Naive thymus-derived CD4-positive, alpha-beta T cell (primary cell): ENCODE measurements at regions of chr11 and their contacts with region 1.

Region 1: GRCh38 chr11:62671575-62672389 is at the starts of genes LBHD1 and UQCC3:
- DNase-seq: peak; percentile 49 to 80 (median 73)
- ATAC-seq: peak; percentile 85
- H3K4me3 ChIP-seq: peak within 1 kb of the TSS; percentile 62
- H3K4me3 Mint-ChIP-seq: peak within 1 kb of the TSS; percentile 94 to 100 (median 99)
- H3K27ac ChIP-seq: peak within 1 kb of the TSS; percentile 90
- H3K27ac Mint-ChIP-seq: peak within 1 kb of the TSS; percentile 91 to 97 (median 96)
- H3K4me1 ChIP-seq: peaks cover 12 to 25% of the 10 kb centered on the region in 2 donors
- H3K4me1 Mint-ChIP-seq: peaks cover 12 to 62% (median 51%) of the 10 kb centered on the region in 7 donors
- H3K27me3 ChIP-seq: no peaks in the 10 kb centered on the region
- H3K27me3 Mint-ChIP-seq: no peaks in the 10 kb centered on the region
- total RNA-seq, gene LBHD1: 13.8 to 26.4 (median 20.8) TPM
- total RNA-seq, gene UQCC3: 2.2 to 8.2 (median 5.8) TPM

Region 2: DNA sequence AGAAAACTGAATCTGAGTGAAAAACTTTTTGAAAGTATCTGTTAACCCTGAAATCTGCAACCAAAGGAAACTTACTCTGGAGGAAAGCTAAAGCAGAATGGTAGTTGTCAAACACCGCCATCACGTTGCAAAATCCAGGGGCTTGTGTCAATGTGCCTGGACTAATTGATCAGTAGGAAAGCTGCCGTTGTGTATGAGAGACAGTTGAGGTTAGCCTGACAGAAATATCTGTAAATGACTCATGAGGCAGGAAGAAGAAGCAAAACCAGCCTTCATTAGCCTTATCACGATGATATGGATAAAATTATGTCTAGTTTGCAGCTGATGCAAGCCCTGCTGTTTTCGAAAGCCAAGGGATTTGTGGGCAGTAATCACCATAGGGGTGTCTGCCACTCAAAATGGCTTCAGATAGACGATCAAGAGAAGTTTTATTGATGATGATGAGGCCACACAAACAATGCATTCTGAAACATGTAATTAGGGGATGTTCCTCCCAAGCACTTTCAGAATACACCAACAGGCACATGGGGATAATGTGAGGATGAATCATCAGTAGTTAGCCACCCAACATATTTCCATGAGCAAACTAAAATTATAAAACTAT is 244.1 kb before region 1 on chr11:
- CTCF ChIA-PET with region 1: interaction called, 4 read pairs
- POLR2A ChIA-PET with region 1: no interaction called
- intact Hi-C with region 1: loop called in 1 of 2 experiments (anchors 10 kb)
- DNase-seq: peak in 1 of 9 donors; percentile 34
- ATAC-seq: peak; percentile 54
- H3K4me3 ChIP-seq: no peak overlapping the region
- H3K4me3 Mint-ChIP-seq: peak overlapping the region in 3 of 10 donors; percentile 19 to 61 (median 43)
- H3K27ac ChIP-seq: no peak overlapping the region
- H3K27ac Mint-ChIP-seq: peak overlapping the region in 6 of 9 donors; percentile 26 to 91 (median 87)
- H3K4me1 ChIP-seq: peaks cover 19 to 24% of the 10 kb centered on the region in 2 donors
- H3K4me1 Mint-ChIP-seq: peaks cover 24 to 65% (median 32%) of the 10 kb centered on the region in 7 donors
- H3K27me3 ChIP-seq: no peaks in the 10 kb centered on the region
- H3K27me3 Mint-ChIP-seq: peaks cover 0 to 5% (median 0%) of the 10 kb centered on the region in 5 donors

Region 3: GRCh38 chr11:62612366-62613290 is 59.2 kb before region 1 on chr11 and contains the starts of genes EML3 and ROM1:
- CTCF ChIA-PET with region 1: no interaction called
- POLR2A ChIA-PET with region 1: interaction called, 94 read pairs
- intact Hi-C with region 1: no loop called
- DNase-seq: peak; percentile 74 to 96 (median 83)
- ATAC-seq: peak; percentile 90
- H3K4me3 ChIP-seq: peak within 1 kb of the TSS; percentile 99
- H3K4me3 Mint-ChIP-seq: peak within 1 kb of the TSS; percentile 89 to 100 (median 96)
- H3K27ac ChIP-seq: peak within 1 kb of the TSS; percentile 92
- H3K27ac Mint-ChIP-seq: peak within 1 kb of the TSS; percentile 93 to 100 (median 97)
- H3K4me1 ChIP-seq: peaks cover 19 to 32% of the 10 kb centered on the region in 2 donors
- H3K4me1 Mint-ChIP-seq: peaks cover 31 to 56% (median 48%) of the 10 kb centered on the region in 7 donors
- H3K27me3 ChIP-seq: no peaks in the 10 kb centered on the region
- H3K27me3 Mint-ChIP-seq: no peaks in the 10 kb centered on the region
- total RNA-seq, gene EML3: 152 to 209 (median 188) TPM
- total RNA-seq, gene ROM1: 1.2 to 2.4 (median 2.0) TPM

Region 4: DNA sequence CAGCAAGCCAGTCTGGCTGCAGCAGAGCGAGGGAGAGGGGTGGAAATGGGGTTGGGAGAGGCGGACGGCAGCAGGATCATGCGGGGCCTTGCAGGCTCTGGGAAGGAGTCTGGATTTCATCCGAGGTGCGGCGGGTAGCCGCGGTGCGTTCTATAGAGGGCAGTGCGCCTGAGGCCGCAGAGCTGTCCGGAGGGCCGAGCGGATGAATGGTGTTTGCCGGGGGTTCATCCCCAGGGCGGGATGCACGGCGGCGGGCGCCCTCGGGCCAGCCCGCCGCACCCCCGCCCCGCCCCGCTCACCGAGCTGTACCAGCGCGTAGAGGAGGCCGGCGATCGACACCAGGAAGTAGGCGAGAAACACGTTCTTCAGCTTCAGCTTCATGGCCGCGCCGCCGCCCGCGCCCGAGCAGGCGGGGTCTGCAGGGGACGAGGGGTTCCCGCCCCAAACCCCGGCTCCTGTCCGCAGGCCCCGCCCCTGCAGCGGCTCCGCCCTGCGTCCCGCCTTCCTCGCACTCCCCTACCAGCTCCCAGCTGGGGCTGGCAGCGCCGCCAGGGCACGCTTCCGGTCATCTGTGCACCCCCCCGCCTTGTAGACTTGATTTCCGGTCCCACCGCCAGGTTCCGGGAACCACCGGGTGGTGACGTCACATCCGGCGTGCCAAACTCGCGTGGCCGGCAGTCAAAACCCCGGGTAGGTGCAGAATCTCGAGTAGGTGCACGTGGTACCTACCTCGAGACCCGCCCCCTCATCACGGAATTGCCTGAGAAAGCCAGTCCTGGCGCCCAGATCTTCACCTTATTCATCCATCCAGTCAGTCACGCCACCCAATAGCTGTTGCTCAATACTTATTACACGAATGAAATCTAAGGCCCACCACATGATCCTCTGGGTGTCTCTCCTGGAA is 50.0 kb before region 1 on chr11 and contains the start of gene B3GAT3:
- CTCF ChIA-PET with region 1: interaction called, 3 read pairs
- POLR2A ChIA-PET with region 1: interaction called, 94 read pairs
- intact Hi-C with region 1: loop called in 1 of 2 experiments (anchors 2 kb)
- DNase-seq: peak; percentile 87 to 97 (median 94)
- ATAC-seq: peak; percentile 93
- H3K4me3 ChIP-seq: peak within 1 kb of the TSS; percentile 97
- H3K4me3 Mint-ChIP-seq: peak within 1 kb of the TSS; percentile 91 to 99 (median 94)
- H3K27ac ChIP-seq: peak within 1 kb of the TSS; percentile 92
- H3K27ac Mint-ChIP-seq: peak within 1 kb of the TSS; percentile 92 to 99 (median 96)
- H3K4me1 ChIP-seq: peaks cover 11% of the 10 kb centered on the region in 2 donors
- H3K4me1 Mint-ChIP-seq: peaks cover 13 to 29% (median 26%) of the 10 kb centered on the region in 7 donors
- H3K27me3 ChIP-seq: no peaks in the 10 kb centered on the region
- H3K27me3 Mint-ChIP-seq: no peaks in the 10 kb centered on the region
- total RNA-seq, gene B3GAT3: 55.8 to 78.1 (median 71.2) TPM

Region 5: DNA sequence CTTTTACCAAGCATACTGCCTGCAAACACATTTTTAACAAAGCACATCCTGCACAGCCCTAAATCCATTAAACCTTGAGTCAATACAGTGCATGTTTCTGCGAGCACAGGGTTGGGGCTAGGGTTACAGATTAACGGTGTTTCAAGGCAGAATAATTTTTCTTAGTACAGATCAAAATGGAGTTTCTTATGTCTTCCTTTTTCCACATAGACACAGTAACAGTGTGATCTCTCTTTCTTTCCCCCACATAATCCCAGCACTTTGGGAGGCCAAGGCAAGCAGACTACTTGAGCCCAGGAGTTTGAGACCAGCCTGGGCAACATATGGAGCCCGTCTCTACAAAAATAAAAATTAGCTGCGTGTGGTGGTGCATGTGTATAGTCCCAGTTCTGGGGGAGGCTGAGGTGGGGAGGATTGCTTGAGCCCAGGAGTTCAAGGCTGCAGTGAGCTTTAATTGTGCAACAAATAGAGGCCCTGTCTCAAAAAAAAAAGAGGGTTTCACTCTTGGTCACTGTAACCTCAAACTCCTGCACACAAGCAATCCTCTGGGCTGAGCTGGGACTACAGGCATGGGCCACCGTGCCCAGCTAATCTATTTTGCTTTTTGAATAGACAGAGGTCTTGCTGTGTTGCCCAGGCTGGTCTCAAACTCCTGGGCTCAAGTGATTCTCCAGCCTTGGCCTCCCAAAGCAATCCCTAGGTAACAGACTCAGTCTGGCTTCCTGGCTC is 189.2 kb after region 1 on chr11:
- CTCF ChIA-PET with region 1: no interaction called
- POLR2A ChIA-PET with region 1: interaction called, 10 read pairs
- intact Hi-C with region 1: loop called in 1 of 2 experiments (anchors 5 kb)
- DNase-seq: no peak
- ATAC-seq: no peak
- H3K4me3 ChIP-seq: no peak overlapping the region
- H3K4me3 Mint-ChIP-seq: no peak overlapping the region
- H3K27ac ChIP-seq: no peak overlapping the region
- H3K27ac Mint-ChIP-seq: peak overlapping the region in 2 of 9 donors; percentile 58 to 59
- H3K4me1 ChIP-seq: peaks cover 5 to 8% of the 10 kb centered on the region in 2 donors
- H3K4me1 Mint-ChIP-seq: peaks cover 7 to 54% (median 17%) of the 10 kb centered on the region in 7 donors
- H3K27me3 ChIP-seq: no peaks in the 10 kb centered on the region
- H3K27me3 Mint-ChIP-seq: peaks cover 0 to under 1% (median 0%) of the 10 kb centered on the region in 5 donors